ENCODE measurements at regions of chr2 and their contacts with region 1.

Region 1: DNA sequence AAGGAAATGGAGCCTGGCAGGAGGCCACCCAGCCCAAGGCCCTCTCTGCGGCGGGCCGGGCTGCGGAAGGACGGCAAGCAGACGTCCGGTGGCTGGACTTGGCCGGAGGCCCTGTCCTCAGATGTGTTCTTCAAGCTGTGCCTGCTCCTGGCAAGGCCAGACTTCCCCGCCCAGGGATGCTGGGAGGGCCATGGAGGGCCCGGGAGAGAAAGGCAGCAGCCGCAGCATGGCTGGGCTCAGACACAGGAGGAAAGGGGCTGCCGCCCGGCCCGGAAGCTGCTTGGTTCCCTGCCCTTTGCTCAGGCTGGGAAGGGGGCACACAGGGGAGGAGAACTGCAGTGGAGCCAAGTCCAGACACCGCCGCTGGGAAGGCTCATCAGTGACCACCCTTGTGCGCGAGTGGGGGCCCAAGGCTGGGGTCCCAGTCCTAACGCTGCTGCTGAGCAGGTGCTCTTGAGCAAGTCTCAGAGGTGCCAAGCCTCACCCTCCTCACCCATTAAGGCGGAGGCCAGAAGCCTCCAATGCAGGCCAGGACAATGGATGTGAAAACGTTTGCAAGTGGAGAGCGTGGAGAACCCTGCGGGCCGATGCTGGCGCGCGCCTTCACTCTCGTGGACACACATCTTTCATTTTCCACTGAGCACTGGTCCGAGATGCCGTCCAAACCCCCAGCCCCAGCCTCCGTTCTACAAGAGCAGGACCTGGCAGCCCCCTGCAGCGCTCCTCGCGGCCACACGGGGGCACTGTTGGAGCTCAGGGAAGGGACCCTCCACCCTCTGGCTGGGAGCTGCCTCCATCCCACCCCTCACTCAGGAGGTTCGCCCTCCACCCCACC is 7.9 kb downstream of the CROCC2 start:
- DNase-seq: peak; percentile 66
- ATAC-seq: peak; percentile 71
- H3K4me3 Mint-ChIP-seq: no peak overlapping the region
- H3K27ac Mint-ChIP-seq: no peak overlapping the region
- H3K4me1 Mint-ChIP-seq: peaks cover 11% of the 10 kb centered on the region
- H3K27me3 Mint-ChIP-seq: peaks cover 24% of the 10 kb centered on the region
- CTCF ChIP-seq: peak; percentile 15

Region 2: DNA sequence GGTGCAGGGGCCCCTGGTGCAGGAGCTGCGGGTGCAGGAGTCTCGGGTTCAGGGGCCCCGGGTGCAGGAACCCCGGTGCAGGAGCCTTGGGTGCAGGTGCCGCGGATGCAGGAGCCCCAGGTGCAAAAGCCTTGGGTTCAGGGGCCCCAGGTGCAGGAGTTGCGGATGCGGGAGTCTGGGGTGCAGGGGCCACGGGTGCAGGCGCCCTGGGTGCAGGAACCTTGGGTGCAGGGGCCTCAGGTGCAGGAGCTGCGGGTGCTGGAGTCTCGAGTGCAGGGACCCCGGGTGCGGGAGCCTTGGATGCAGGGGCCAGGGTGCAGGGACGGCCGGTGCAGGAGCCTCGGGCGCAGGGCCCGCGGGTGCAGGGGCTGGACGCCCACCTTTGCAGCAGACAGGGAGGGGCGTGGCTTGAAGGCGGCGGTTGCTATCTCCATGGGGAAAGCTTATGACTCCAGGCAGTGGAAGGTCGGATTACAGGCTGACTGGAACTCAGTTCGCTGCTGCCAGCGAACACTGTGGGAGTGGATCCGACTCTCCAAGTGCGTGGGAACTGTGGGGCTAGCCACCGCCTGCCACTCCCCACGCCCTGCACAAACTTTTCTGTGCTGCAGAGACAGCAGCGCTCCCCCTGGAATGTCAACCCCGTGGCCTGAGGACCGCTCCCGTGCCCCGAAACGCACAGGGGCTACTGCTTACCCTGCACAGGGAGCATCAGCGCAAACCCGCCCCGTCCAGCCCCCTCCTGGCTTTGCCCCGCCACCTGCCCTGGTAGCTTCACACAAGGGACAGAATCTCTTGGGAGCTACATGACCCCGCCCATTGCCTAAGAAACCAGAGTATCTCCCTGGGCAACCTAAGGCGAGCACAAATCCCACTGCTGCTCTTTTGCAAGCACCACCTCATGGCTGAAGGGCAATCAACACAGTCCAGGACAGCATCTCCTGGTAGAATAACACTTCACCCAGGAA is 818.2 kb before region 1 on chr2:
- CTCF ChIA-PET with region 1: no interaction called
- POLR2A ChIA-PET with region 1: no interaction called
- intact Hi-C with region 1: no loop called
- DNase-seq: no peak
- ATAC-seq: no peak
- H3K4me3 Mint-ChIP-seq: no peak overlapping the region
- H3K27ac Mint-ChIP-seq: no peak overlapping the region
- H3K4me1 Mint-ChIP-seq: no peaks in the 10 kb centered on the region
- H3K27me3 Mint-ChIP-seq: peaks cover 64% of the 10 kb centered on the region
- CTCF ChIP-seq: no peak

Region 3: GRCh38 chr2:241074901-241075540 is 161.0 kb after region 1 on chr2:
- CTCF ChIA-PET with region 1: interaction called, 3 read pairs
- POLR2A ChIA-PET with region 1: no interaction called
- intact Hi-C with region 1: loop called (anchors 5 kb)
- DNase-seq: no peak
- ATAC-seq: no peak
- H3K4me3 Mint-ChIP-seq: no peak overlapping the region
- H3K27ac Mint-ChIP-seq: no peak overlapping the region
- H3K4me1 Mint-ChIP-seq: peaks cover 5% of the 10 kb centered on the region
- H3K27me3 Mint-ChIP-seq: no peaks in the 10 kb centered on the region
- CTCF ChIP-seq: no peak

Region 4: DNA sequence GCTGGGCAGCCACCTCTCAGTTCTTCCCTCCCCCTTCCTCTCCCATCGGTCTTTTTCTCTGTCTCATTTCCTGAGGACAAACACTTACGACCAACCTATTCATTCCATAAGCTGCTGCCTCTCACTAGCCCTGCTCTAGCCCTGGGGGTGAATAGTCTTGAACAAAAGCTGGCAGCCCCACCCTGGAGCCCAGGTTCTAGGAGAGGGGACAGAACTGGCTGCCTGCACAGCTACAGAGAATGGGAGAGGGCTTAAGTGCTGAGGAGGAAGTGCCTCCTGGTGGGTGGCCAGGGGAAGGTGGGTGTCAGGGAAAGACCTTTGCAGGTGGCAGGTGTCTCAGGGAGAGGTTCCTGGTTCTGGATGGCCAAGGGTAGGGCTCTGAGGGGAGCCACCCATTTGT is 297.3 kb after region 1 on chr2:
- CTCF ChIA-PET with region 1: no interaction called
- POLR2A ChIA-PET with region 1: no interaction called
- intact Hi-C with region 1: loop called (anchors 2 kb)
- DNase-seq: no peak
- ATAC-seq: no peak
- H3K4me3 Mint-ChIP-seq: no peak overlapping the region
- H3K27ac Mint-ChIP-seq: no peak overlapping the region
- H3K4me1 Mint-ChIP-seq: peaks cover 2% of the 10 kb centered on the region
- H3K27me3 Mint-ChIP-seq: no peaks in the 10 kb centered on the region
- CTCF ChIP-seq: no peak